Posterior vena cava (tissue), 2 donors: ENCODE measurements at regions of chr13 and their contacts with region 1.

Region 1: DNA sequence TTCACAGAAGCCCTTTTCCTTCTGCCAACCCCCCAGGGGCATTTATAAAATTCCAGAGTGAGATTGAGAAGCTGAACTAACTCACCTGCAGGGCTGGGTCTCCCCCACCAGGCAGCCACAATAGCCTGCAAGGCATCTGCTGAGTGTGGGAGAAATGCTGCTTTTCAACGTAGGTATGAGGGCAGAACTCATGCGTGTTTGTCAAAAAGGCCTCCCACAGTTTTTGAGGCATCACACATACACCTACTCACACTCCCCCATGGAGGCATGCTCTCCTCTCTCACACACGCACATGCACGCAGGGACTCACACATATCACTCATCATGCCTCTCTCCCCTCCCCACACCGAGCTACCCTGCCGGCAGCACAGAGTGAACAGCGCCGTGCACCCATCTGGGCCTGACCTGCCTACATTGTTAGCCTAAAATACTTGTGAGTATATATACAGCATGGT is 390.5 kb downstream of the FGF9 start:
- DNase-seq: no peak

Region 2: GRCh38 chr13:21733475-21734263 is 327.7 kb before region 1 on chr13:
- intact Hi-C with region 1: no loop called
- DNase-seq: no peak

Region 3: DNA sequence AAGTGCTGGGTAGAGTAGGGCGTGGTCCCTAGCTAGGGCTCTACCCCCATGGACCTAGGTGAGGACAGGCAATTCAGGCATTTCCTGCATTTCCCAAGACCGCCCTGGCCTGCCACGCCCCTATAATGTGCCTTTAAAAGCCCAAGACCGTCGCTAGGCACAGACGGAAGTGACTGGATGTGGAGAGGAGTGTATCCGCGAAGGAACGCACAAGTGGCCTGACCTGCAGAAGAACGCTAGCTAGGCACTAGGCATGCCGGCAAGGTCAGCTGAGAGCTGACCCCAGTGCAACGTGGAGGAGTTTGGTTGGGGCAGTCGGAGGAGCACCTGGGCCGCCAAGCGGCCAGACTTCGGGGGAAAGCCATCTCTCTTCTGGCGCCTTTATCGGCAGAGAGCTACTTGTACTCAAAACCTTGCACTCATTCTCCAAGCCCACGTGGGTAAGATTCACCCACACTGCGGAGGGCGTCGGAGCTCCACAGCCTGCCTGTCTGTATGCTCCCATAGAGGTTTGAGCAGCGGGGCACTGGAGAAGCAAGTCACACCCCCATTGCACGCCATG is 20.5 kb before region 1 on chr13:
- intact Hi-C with region 1: loop called in 1 of 2 experiments (anchors 1 kb)
- DNase-seq: no peak